IMR-90 (cell line): ENCODE measurements at regions of chr1 and their contacts with region 1.

Region 1: DNA sequence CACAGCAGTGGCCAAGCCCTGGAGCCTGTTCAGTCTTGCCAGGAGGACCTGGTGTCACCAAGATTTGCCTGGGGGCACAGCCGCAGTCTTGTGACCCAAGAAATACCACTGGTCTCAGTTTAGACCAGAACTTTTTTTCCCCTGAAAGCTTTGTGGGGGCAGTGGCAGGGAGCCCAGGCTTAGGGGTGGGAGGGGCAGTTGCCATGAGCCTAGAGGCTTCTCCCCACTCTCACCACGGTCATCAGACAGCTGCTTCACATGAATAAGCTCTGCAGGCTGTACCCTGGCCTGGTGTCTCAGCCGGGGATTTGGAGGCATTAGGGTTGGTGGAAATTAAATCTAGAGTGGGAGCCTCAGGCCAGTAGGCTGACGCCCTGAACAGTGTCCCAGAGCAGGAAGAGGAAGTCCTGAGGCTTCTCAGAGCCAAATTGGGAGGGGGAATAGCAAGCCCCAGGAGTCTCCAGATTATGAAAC is 73.7 kb downstream of the SLC16A1 start:
- DNase-seq: no peak
- ATAC-seq: no peak
- H3K4me3 ChIP-seq: no peak overlapping the region
- H3K27ac ChIP-seq: no peak overlapping the region
- H3K4me1 ChIP-seq: peaks cover 5% of the 10 kb centered on the region
- H3K27me3 ChIP-seq: peaks cover 5% of the 10 kb centered on the region
- CTCF ChIP-seq: no peak
- POLR2A ChIP-seq: no peak
- RAD21 ChIP-seq: no peak

Region 2: GRCh38 chr1:112809253-112809684 is 73.0 kb before region 1 on chr1:
- CTCF ChIA-PET with region 1: interaction called, 3 read pairs
- POLR2A ChIA-PET with region 1: no interaction called
- dilution Hi-C with region 1: no loop called
- in situ Hi-C with region 1: no loop called
- intact Hi-C with region 1: loop called (anchors 1 kb)
- DNase-seq: peak; percentile 57
- ATAC-seq: peak; percentile 98
- H3K4me3 ChIP-seq: no peak overlapping the region
- H3K27ac ChIP-seq: no peak overlapping the region
- H3K4me1 ChIP-seq: no peaks in the 10 kb centered on the region
- H3K27me3 ChIP-seq: peaks cover 9% of the 10 kb centered on the region
- CTCF ChIP-seq: peak; percentile 87
- POLR2A ChIP-seq: no peak
- RAD21 ChIP-seq: peak; percentile 89